ENCODE measurements at regions of chr2 and their contacts with region 1.

Region 1: DNA sequence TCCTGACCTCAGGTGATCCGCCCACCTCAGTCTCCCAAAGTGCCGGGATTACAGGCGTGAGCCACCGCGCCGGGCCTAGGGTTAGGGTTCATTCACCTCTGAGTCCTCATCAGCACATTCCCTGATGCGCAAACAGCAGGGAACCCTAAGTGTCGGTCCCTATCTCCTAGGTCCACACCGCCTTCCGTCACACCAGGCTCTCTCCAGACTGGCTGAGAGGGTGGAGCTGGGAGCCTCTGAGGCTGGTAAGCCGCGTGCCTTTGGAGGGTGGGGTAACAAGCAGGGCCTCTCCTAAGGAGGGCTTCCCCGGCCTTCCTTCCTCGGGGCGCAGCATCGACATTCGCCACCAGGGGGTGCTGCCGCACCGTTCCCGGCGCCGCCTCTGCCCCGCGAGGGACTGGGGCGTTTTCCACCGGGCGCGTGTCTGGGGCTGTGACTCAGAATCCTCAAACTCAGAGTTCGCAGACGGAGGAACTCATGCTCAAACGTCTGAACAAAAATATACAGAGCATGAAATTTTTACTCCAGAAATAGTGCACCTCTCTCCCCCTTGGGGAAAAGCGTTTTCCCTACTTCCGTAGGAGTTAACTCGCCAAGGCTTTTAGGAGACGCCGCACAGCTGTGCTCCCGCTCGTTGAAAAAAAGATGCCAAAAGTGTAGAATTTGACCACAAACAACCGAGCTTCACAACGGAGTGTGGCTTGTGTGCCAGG is 63.9 kb upstream of the ASAP2 start:
- H3K4me3 ChIP-seq: no peak overlapping the region
- H3K27ac ChIP-seq: no peak overlapping the region
- H3K4me1 ChIP-seq: peaks cover 2% of the 10 kb centered on the region; the same call in 1 of the 2 replicates
- CTCF ChIP-seq: peak; percentile 95

Region 2: GRCh38 chr2:9114516-9114915 is 28.2 kb before region 1 on chr2:
- CTCF ChIA-PET with region 1: interaction called, 10 read pairs
- POLR2A ChIA-PET with region 1: no interaction called
- H3K4me3 ChIP-seq: no peak overlapping the region
- H3K27ac ChIP-seq: no peak overlapping the region
- H3K4me1 ChIP-seq: no peaks in the 10 kb centered on the region
- CTCF ChIP-seq: no peak

Region 3: GRCh38 chr2:9160732-9161131 is 18.0 kb after region 1 on chr2:
- CTCF ChIA-PET with region 1: interaction called, 14 read pairs
- POLR2A ChIA-PET with region 1: interaction called, 3 read pairs
- H3K4me3 ChIP-seq: no peak overlapping the region
- H3K27ac ChIP-seq: no peak overlapping the region
- H3K4me1 ChIP-seq: no peaks in the 10 kb centered on the region
- CTCF ChIP-seq: 0 out of 2 replicates have a peak, but pooled peaks have one; percentile 18

Region 4: DNA sequence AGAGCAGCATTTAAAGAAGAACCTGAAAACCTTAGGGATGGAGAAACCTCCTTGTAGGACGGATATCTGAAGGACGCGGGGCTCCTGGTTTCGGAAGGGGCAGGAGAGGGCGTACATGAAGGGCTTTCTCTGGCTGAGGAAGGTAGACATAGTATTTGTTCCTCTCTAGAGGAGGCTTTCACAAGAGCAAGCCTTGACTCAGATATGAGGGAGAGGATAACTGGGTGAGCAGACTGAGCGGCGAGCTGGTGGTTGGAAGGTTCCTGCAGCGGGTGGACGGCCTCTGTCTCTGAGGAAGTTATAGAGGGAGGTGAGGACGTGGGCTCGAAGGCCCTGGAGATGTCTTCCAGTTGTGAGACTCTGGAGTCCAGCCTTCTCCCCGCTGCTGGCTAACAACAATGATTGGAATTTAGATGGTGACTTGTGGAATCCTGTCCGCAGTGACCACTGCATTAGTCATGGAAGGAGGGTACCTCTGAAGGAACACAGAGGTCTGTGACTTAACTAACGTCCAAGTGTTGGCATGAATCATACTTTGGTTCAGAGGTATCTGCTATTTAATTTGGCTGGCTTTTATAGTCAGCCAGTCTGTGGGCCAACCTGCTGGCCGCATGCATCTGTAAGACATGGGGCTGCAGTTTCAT is 144.8 kb after region 1 on chr2:
- CTCF ChIA-PET with region 1: interaction called, 15 read pairs
- POLR2A ChIA-PET with region 1: no interaction called
- H3K4me3 ChIP-seq: no peak overlapping the region
- H3K27ac ChIP-seq: no peak overlapping the region
- H3K4me1 ChIP-seq: peaks cover 7% of the 10 kb centered on the region
- CTCF ChIP-seq: no peak

Region 5: DNA sequence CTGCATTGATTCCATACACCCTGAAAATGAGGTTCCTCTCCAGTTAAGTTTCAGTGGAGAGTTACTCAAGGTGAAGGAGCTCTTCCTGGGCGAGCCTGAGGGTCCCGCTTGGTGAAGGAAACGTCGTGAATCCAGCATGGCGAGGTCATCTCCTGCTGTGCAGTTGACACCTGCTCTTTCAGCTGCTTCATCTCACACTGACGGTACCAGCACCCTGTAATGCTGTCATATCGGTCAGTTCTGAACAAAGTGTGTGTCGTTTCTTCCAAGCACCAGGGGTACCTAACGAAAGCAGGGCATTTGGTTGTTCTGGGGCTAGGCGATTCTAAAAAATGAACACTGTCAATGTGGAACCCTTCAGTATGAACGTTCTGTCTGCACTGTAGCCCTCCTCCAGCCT is 228.0 kb after region 1 on chr2:
- CTCF ChIA-PET with region 1: interaction called, 15 read pairs
- POLR2A ChIA-PET with region 1: no interaction called
- H3K4me3 ChIP-seq: no peak overlapping the region
- H3K27ac ChIP-seq: no peak overlapping the region
- H3K4me1 ChIP-seq: peaks cover 3% of the 10 kb centered on the region
- CTCF ChIP-seq: no peak